GM23248 (cell line): ENCODE measurements at regions of chr15 and their contacts with region 1.

Region 1: GRCh38 chr15:27897481-27897880 is 201.6 kb downstream of the OCA2 start:
- DNase-seq: no peak
- H3K4me3 ChIP-seq: no peak overlapping the region
- H3K27ac ChIP-seq: no peak overlapping the region
- H3K4me1 ChIP-seq: no peaks in the 10 kb centered on the region
- H3K27me3 ChIP-seq: no peaks in the 10 kb centered on the region

Region 2: GRCh38 chr15:27797765-27798164 is 99.7 kb before region 1 on chr15:
- in situ Hi-C with region 1: loop called (anchors 25 kb)
- DNase-seq: no peak
- H3K4me3 ChIP-seq: no peak overlapping the region
- H3K27ac ChIP-seq: no peak overlapping the region
- H3K4me1 ChIP-seq: no peaks in the 10 kb centered on the region
- H3K27me3 ChIP-seq: no peaks in the 10 kb centered on the region